ENCODE measurements at regions of chr12 and their contacts with region 1.

Region 1: DNA sequence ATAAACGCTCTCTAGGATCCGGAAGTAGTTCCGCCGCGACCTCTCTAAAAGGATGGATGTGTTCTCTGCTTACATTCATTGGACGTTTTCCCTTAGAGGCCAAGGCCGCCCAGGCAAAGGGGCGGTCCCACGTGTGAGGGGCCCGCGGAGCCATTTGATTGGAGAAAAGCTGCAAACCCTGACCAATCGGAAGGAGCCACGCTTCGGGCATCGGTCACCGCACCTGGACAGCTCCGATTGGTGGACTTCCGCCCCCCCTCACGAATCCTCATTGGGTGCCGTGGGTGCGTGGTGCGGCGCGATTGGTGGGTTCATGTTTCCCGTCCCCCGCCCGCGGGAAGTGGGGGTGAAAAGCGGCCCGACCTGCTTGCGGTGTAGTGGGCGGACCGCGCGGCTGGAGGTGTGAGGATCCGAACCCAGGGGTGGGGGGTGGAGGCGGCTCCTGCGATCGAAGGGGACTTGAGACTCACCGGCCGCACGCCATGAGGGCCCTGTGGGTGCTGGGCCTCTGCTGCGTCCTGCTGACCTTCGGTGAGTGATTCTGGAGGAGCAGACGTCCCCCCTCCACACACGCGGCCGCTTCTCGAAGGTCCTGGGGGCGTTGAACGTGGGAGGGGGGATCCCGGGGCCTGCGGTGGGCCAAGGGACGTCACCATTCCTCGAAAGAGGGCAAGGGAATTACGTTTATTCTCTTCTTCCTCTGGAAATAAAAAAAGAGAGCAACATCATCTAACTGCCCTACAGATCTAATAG is at the start of gene HSP90B1:
- DNase-seq: peak; percentile 100
- H3K4me3 Mint-ChIP-seq: peak within 1 kb of the TSS; percentile 81
- H3K27ac Mint-ChIP-seq: peak within 1 kb of the TSS; percentile 100
- H3K4me1 Mint-ChIP-seq: peaks cover 57% of the 10 kb centered on the region
- H3K27me3 Mint-ChIP-seq: no peaks in the 10 kb centered on the region
- total RNA-seq, gene HSP90B1: 392 to 418 TPM

Region 2: DNA sequence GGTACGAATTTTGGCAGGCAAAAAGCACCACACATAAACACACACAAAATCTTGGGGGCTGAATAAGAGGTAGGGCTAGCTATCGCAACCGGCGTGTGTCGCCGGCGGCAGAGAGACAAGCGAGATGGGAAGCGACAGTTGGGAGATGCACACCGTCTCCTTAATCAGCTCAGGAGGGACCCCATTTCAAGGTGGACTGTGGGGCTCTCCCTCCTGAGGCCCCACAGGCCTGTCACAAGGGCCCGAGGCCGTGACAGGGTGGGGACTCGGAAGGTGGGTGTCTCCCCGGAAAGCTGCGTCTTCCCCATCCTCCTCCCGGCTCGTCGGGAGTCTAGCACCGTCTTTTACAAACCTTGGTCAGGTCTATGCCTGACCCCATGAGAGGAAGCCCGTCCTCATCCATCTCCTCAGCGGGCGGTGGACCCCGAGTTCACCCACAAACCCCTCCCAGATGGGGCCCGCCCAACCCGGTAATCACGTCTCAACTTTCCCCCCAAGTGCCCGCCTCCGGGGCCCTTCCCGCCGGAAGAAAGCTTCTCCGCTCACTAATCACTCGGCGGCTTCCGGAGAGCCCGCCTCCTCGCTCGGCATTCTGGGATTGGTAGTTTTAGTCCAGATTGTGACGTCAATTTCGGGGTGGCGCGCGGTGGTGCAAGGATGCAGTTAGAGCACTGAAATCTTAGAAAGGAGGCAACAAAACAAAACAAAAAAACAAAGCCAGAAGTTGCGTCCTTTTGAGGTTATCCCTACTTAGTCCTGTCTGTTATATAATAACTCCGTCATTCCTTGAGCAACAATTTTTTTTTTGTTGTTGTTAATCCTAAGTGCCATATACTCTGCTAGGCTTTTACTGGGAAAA is 1868.4 kb before region 1 on chr12 and contains the start of gene WASHC3:
- CTCF ChIA-PET with region 1: no interaction called
- intact Hi-C with region 1: loop called (anchors 1 kb)
- DNase-seq: peak; percentile 98
- H3K4me3 Mint-ChIP-seq: peak within 1 kb of the TSS; percentile 96
- H3K27ac Mint-ChIP-seq: peak within 1 kb of the TSS; percentile 98
- H3K4me1 Mint-ChIP-seq: peaks cover 29% of the 10 kb centered on the region
- H3K27me3 Mint-ChIP-seq: no peaks in the 10 kb centered on the region
- total RNA-seq, gene WASHC3: 22.1 to 25.6 TPM

Region 3: DNA sequence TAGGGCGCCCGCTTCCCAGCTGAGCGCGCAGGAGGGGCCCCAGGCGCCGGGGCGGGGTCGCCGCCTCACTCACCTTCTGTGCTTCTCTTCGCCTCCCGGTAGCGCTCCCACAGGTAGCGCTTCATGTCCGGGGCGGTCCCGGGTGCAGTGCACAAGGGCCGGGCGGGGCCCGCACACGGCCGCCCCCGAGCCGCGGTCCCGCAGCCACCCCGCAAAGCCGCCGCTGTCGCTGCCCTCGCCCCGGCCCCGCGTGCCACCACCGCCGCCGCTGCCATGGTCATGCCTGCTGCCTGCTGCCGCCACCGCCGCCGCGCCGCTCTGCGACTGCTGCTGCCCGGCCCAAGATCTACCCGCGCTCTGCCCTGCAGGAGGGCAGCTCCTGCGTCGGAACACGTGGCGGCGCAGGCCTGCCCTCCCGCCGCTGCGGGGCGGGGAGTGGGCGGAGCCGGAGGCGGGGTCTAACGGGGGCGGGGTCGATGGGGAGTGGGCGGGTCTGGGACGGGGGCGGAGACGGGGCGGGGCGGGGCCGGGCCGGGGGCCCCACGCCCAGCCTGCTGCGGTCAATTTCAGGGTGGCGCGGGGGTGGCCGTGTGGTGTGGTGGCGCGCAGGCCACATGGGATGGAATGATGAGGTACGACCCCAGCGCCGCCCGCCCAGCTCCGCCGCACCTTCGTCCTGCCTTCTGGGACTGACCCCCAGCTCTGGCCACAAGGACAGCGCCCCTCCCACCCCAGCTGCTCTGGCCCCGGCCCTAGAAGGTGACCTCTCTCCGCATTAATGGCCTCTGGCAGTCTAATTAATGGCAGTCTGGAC is 89.1 kb before region 1 on chr12 and contains the start of gene NT5DC3:
- CTCF ChIA-PET with region 1: interaction called, 3 read pairs
- intact Hi-C with region 1: loop called (anchors 1 kb)
- DNase-seq: peak; percentile 82
- H3K4me3 Mint-ChIP-seq: peak within 1 kb of the TSS; percentile 81
- H3K27ac Mint-ChIP-seq: no peak within 1 kb of the TSS
- H3K4me1 Mint-ChIP-seq: peaks cover 21% of the 10 kb centered on the region
- H3K27me3 Mint-ChIP-seq: no peaks in the 10 kb centered on the region
- total RNA-seq, gene NT5DC3: 6.0 to 6.4 TPM

Region 4: GRCh38 chr12:103956516-103957027 is 26.4 kb after region 1 on chr12:
- CTCF ChIA-PET with region 1: interaction called, 6 read pairs
- intact Hi-C with region 1: loop called (anchors 1 kb)
- DNase-seq: peak; percentile 15
- H3K4me3 Mint-ChIP-seq: peak overlapping the region; percentile 92
- H3K27ac Mint-ChIP-seq: peak overlapping the region; percentile 93
- H3K4me1 Mint-ChIP-seq: peaks cover 48% of the 10 kb centered on the region
- H3K27me3 Mint-ChIP-seq: no peaks in the 10 kb centered on the region

Region 5: DNA sequence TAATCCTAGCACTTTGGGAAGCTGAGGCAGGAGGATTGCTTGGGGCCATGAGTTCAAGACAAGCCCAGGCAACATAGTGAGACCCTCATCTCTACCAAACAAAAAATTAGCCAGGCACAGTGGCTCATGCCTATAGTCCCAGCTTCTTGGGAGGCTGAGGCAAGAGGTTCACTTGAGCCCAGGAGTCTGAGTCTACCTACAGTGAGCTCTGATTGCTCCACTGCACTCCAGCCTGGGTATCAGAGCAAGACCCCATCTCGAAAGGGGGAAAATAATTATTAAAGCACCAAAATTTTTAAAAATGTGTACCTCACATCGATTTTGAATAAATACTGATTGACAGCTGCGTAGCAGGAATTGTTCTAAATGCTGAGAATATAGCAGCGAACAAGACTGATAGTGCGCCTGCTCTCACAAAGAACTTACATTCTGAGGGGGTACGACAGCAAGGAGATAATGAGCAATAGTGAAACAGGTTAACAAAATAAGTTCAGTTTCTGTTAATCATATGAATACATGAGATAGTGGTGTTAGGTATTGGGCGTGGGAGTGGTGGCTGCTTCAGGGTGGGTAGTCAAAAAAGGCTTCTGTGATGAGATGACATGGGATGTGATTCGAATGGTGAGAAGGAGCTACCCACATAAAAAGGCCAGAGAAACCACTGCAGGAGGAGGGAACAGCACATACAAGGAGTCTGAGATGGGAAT is 153.7 kb after region 1 on chr12:
- CTCF ChIA-PET with region 1: no interaction called
- intact Hi-C with region 1: loop called (anchors 1 kb)
- DNase-seq: peak; percentile 61
- H3K4me3 Mint-ChIP-seq: no peak overlapping the region
- H3K27ac Mint-ChIP-seq: no peak overlapping the region
- H3K4me1 Mint-ChIP-seq: peaks cover 15% of the 10 kb centered on the region
- H3K27me3 Mint-ChIP-seq: no peaks in the 10 kb centered on the region

Region 6: GRCh38 chr12:104286538-104287482 is 356.6 kb after region 1 on chr12:
- CTCF ChIA-PET with region 1: no interaction called
- intact Hi-C with region 1: loop called (anchors 1 kb)
- DNase-seq: peak; percentile 94
- H3K4me3 Mint-ChIP-seq: peak overlapping the region; percentile 96
- H3K27ac Mint-ChIP-seq: peak overlapping the region; percentile 98
- H3K4me1 Mint-ChIP-seq: peaks cover 12% of the 10 kb centered on the region
- H3K27me3 Mint-ChIP-seq: no peaks in the 10 kb centered on the region

Region 7: DNA sequence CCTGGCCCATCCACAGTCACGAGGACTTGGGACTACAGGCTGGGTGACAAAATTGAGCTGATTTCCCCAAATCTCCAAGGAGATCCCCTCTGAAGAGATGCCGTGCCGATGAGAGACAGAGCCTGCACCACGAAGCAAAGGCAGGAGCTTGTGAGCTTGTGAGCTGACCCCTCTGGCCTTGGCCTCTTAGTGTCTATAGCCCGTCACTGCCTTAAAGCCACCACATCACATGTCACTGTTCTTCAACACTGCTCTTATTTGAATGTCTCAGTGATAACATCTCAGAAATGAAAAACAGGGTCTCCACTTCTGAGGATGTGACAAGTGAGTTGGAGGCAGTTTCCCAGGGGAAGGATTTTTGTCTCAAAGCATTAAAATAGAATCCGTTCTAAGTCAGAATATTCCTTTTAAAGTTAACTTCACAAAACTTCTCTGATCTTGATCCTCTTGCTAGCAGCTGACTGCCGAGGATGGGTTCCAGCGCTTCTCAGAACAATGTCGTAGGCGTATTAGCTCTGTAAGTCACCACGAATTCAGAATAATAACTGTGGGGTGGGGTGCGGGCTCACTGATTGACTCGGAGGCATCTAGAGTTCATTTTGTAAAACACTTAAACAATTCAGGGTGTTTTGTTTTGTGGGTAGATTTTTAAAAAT is 564.1 kb after region 1 on chr12:
- CTCF ChIA-PET with region 1: no interaction called
- intact Hi-C with region 1: loop called (anchors 5 kb)
- DNase-seq: peak; percentile 85
- H3K4me3 Mint-ChIP-seq: peak overlapping the region; percentile 52
- H3K27ac Mint-ChIP-seq: peak overlapping the region; percentile 70
- H3K4me1 Mint-ChIP-seq: peaks cover 82% of the 10 kb centered on the region
- H3K27me3 Mint-ChIP-seq: no peaks in the 10 kb centered on the region